ENCODE measurements at regions of chr7 and their contacts with region 1.

Region 1: GRCh38 chr7:94792270-94792669 is 115.1 kb upstream of the PPP1R9A start:
- DNase-seq: no peak
- ATAC-seq: no peak
- H3K4me3 ChIP-seq: no peak overlapping the region
- H3K4me3 Mint-ChIP-seq: no peak overlapping the region
- H3K27ac ChIP-seq: no peak overlapping the region
- H3K27ac Mint-ChIP-seq: no peak overlapping the region
- H3K4me1 ChIP-seq: no peaks in the 10 kb centered on the region
- H3K4me1 Mint-ChIP-seq: no peaks in the 10 kb centered on the region
- H3K27me3 ChIP-seq: no peaks in the 10 kb centered on the region
- H3K27me3 Mint-ChIP-seq: no peaks in the 10 kb centered on the region
- CTCF ChIP-seq: no peak

Region 2: GRCh38 chr7:94739180-94739579 is 53.1 kb before region 1 on chr7:
- CTCF ChIA-PET with region 1: no interaction called
- POLR2A ChIA-PET with region 1: no interaction called
- intact Hi-C with region 1: loop called in 1 of 2 experiments (anchors 10 kb)
- DNase-seq: no peak
- ATAC-seq: no peak
- H3K4me3 ChIP-seq: no peak overlapping the region
- H3K4me3 Mint-ChIP-seq: no peak overlapping the region
- H3K27ac ChIP-seq: no peak overlapping the region
- H3K27ac Mint-ChIP-seq: no peak overlapping the region
- H3K4me1 ChIP-seq: no peaks in the 10 kb centered on the region
- H3K4me1 Mint-ChIP-seq: no peaks in the 10 kb centered on the region
- H3K27me3 ChIP-seq: no peaks in the 10 kb centered on the region
- H3K27me3 Mint-ChIP-seq: no peaks in the 10 kb centered on the region
- CTCF ChIP-seq: no peak

Region 3: GRCh38 chr7:95269640-95270039 is 477.4 kb after region 1 on chr7:
- CTCF ChIA-PET with region 1: no interaction called
- POLR2A ChIA-PET with region 1: no interaction called
- intact Hi-C with region 1: no loop called
- DNase-seq: no peak
- ATAC-seq: no peak
- H3K4me3 ChIP-seq: no peak overlapping the region
- H3K4me3 Mint-ChIP-seq: no peak overlapping the region
- H3K27ac ChIP-seq: no peak overlapping the region
- H3K27ac Mint-ChIP-seq: no peak overlapping the region
- H3K4me1 ChIP-seq: no peaks in the 10 kb centered on the region
- H3K4me1 Mint-ChIP-seq: no peaks in the 10 kb centered on the region
- H3K27me3 ChIP-seq: no peaks in the 10 kb centered on the region
- H3K27me3 Mint-ChIP-seq: peaks cover 16% of the 10 kb centered on the region
- CTCF ChIP-seq: no peak